Transverse colon (tissue), 4 donors: ENCODE measurements at regions of chr10 and their contacts with region 1.

Region 1: GRCh38 chr10:62038609-62039190 is 137.2 kb downstream of the ARID5B start:
- DNase-seq: peak; percentile 85
- H3K4me3 ChIP-seq: peak overlapping the region in 2 of 4 donors; percentile 5 to 19
- H3K27ac ChIP-seq: peak overlapping the region; percentile 76 to 83 (median 82)
- H3K4me1 ChIP-seq: peaks cover 30 to 71% (median 51%) of the 10 kb centered on the region in 4 donors
- H3K27me3 ChIP-seq: no peaks in the 10 kb centered on the region
- CTCF ChIP-seq: peak; percentile 80 to 92 (median 85)
- EP300 ChIP-seq: no peak
- POLR2A ChIP-seq: no peak

Region 2: DNA sequence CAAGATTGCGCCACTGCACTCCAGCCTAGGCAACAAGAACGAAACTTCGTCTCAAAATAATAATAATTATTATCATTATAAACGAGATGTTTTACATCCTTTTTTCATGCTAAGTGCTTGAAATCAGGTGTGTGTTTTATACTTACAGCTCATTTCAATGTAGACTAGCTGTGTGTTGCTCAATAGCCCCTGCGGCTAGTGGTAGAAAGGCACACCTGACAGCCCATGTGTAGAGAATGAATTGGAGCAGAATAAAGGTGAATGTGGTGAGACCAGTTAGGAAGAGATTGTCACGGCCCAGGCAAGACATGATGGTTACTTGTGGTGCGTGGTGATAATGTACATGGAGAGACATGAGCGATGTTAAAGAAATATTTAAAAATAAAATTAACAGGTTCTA is 498.8 kb before region 1 on chr10:
- in situ Hi-C with region 1: no loop called
- intact Hi-C with region 1: no loop called
- DNase-seq: no peak
- H3K4me3 ChIP-seq: no peak overlapping the region
- H3K27ac ChIP-seq: no peak overlapping the region
- H3K4me1 ChIP-seq: no peaks in the 10 kb centered on the region
- H3K27me3 ChIP-seq: no peaks in the 10 kb centered on the region
- CTCF ChIP-seq: no peak
- EP300 ChIP-seq: no peak
- POLR2A ChIP-seq: no peak

Region 3: GRCh38 chr10:61896854-61897661 is 141.6 kb before region 1 on chr10:
- in situ Hi-C with region 1: loop called (anchors 10 kb)
- intact Hi-C with region 1: loop called (anchors 1 kb)
- DNase-seq: peak; percentile 58
- H3K4me3 ChIP-seq: peak overlapping the region in 1 of 4 donors; percentile 20
- H3K27ac ChIP-seq: peak overlapping the region; percentile 98
- H3K4me1 ChIP-seq: peaks cover 6 to 39% (median 30%) of the 10 kb centered on the region in 4 donors
- H3K27me3 ChIP-seq: no peaks in the 10 kb centered on the region
- CTCF ChIP-seq: peak; percentile 63 to 81 (median 65)
- EP300 ChIP-seq: no peak
- POLR2A ChIP-seq: no peak

Region 4: GRCh38 chr10:61974601-61975390 is 63.9 kb before region 1 on chr10:
- in situ Hi-C with region 1: no loop called
- intact Hi-C with region 1: loop called (anchors 10 kb)
- DNase-seq: peak; percentile 51
- H3K4me3 ChIP-seq: no peak overlapping the region
- H3K27ac ChIP-seq: peak overlapping the region; percentile 53 to 68 (median 58)
- H3K4me1 ChIP-seq: peaks cover 4 to 57% (median 36%) of the 10 kb centered on the region in 4 donors
- H3K27me3 ChIP-seq: no peaks in the 10 kb centered on the region
- CTCF ChIP-seq: no peak
- EP300 ChIP-seq: no peak
- POLR2A ChIP-seq: no peak

Region 5: DNA sequence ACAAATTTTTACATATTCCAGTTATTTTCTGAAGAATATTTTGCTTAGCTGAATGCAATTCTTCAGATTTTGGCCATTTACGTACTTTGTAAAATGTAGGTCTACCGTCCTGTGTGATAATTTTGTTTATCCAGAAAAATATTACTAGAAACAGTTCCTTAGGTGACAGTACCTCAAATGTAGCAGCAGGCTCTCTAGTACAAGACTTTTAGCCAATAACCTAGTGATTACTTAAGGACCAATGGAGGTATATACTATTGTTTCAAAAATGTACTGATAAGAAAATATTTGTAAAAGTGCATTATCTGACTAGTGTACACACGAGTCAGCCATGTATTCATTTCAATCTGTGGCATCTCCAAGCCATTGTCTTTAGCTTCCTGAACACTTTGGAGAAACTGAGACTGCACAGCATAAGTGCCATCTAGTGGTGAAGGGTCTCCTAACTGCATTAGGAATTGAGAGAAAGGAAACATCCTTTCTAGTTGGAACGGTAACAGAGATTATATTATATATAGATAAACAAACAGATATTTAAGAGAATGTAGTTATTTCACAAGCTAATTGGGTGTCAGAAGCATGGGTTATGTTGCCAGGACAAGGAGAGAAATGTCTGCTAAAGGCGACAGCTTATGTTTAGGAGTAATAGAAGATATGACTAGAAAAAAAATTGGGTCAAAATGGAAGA is 206.2 kb after region 1 on chr10:
- in situ Hi-C with region 1: loop called in 2 of 4 experiments (anchors 5 to 10 kb)
- intact Hi-C with region 1: loop called (anchors 5 kb)
- DNase-seq: peak; percentile 54
- H3K4me3 ChIP-seq: peak overlapping the region in 1 of 4 donors; percentile 14
- H3K27ac ChIP-seq: peak overlapping the region in 2 of 4 donors; percentile 4 to 64
- H3K4me1 ChIP-seq: peaks cover 0 to 20% (median 8%) of the 10 kb centered on the region in 4 donors
- H3K27me3 ChIP-seq: no peaks in the 10 kb centered on the region
- CTCF ChIP-seq: peak; percentile 80 to 92 (median 86)
- EP300 ChIP-seq: no peak
- POLR2A ChIP-seq: no peak